Naive thymus-derived CD4-positive, alpha-beta T cell (primary cell): ENCODE measurements at regions of chr17 and their contacts with region 1.

Region 1: DNA sequence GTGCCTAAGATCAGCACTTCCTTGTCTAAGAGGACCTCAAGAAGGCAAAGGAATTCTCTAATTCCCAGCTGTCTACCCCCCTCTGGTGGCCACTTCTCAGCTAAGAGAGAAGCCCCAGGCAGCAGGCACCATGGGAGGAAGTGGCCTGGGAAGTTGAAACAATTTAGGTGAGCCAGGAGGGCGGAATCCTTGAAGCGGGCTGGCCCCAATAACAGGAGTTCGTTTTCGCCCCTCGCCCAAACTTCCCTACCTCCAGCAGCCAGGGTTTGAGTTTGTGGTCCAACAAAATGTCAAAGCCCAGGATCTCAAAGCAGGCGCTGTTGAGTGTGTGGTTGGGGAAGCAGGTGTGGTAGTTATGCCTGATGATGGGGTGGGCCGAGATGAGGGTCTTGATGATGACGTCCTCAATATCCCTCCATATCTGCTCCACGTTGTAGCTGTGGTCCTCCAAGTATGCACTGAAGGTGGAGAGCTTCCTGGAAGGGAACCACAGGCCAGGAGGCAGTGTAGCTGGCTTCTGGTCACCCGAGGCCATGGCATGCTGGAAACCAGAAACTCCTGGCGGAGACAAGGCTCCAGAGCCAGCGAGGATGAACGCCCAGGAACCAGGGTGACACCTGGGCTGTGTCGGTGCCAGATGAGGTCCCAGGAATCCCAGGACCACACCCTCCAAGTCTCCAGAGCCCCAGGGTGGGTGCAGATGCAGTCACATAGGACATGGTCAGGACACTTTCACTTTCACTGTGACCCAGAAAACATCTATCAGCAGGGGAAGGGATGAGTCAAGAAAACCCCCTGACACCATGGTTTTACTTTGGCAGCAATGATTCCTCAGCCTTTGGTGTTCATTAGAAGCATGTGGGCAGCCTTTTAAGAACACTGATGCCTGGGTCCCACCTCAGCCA is 25.6 kb downstream of the TTLL6 start:
- DNase-seq: peak in 1 of 9 donors; percentile 14
- ATAC-seq: no peak
- H3K4me3 ChIP-seq: no peak overlapping the region
- H3K4me3 Mint-ChIP-seq: peak overlapping the region in 1 of 10 donors; percentile 18
- H3K27ac ChIP-seq: no peak overlapping the region
- H3K27ac Mint-ChIP-seq: peak overlapping the region in 1 of 9 donors; percentile 49
- H3K4me1 ChIP-seq: no peaks in the 10 kb centered on the region
- H3K4me1 Mint-ChIP-seq: peaks cover 0 to 22% (median 0%) of the 10 kb centered on the region in 7 donors
- H3K27me3 ChIP-seq: no peaks in the 10 kb centered on the region
- H3K27me3 Mint-ChIP-seq: peaks cover 29 to 62% (median 45%) of the 10 kb centered on the region in 5 donors

Region 2: DNA sequence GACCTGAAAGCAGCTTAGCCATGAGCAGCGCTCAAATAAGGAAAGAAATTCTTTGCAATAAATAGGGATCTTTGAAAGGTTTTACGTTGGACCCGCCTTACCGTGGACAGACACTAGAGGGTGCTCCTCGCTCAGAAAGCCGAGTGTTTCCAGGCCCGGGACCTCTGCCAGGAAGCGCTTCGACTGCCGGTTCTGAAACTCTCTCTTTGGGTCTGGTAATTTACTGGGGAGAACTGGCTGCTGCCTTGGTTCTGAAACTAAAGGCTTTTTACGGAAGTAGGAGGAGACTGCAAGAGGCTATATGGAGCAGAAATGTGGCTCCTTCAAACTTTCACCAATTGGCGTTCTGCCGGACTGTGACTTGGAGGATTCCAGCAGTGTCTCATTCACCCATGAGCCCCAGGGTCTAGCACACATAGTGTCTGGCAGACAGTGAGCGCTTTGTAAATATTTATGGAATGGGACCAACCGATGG is 119.6 kb before region 1 on chr17:
- CTCF ChIA-PET with region 1: no interaction called
- POLR2A ChIA-PET with region 1: no interaction called
- intact Hi-C with region 1: loop called (anchors 1 to 5 kb)
- DNase-seq: peak; percentile 42 to 70 (median 60)
- ATAC-seq: peak; percentile 90
- H3K4me3 ChIP-seq: no peak overlapping the region
- H3K4me3 Mint-ChIP-seq: peak overlapping the region in 8 of 10 donors; percentile 16 to 62 (median 54)
- H3K27ac ChIP-seq: no peak overlapping the region
- H3K27ac Mint-ChIP-seq: no peak overlapping the region
- H3K4me1 ChIP-seq: no peaks in the 10 kb centered on the region
- H3K4me1 Mint-ChIP-seq: peaks cover 0 to 7% (median 5%) of the 10 kb centered on the region in 7 donors
- H3K27me3 ChIP-seq: no peaks in the 10 kb centered on the region
- H3K27me3 Mint-ChIP-seq: peaks cover 28 to 54% (median 42%) of the 10 kb centered on the region in 5 donors

Region 3: GRCh38 chr17:48678141-48678971 is 113.0 kb before region 1 on chr17:
- CTCF ChIA-PET with region 1: interaction called, 19 read pairs
- POLR2A ChIA-PET with region 1: no interaction called
- intact Hi-C with region 1: loop called (anchors 1 to 5 kb)
- DNase-seq: peak; percentile 43 to 80 (median 61)
- ATAC-seq: peak; percentile 95
- H3K4me3 ChIP-seq: no peak overlapping the region
- H3K4me3 Mint-ChIP-seq: peak overlapping the region in 4 of 10 donors; percentile 33 to 67 (median 43)
- H3K27ac ChIP-seq: no peak overlapping the region
- H3K27ac Mint-ChIP-seq: peak overlapping the region in 1 of 9 donors; percentile 43
- H3K4me1 ChIP-seq: no peaks in the 10 kb centered on the region
- H3K4me1 Mint-ChIP-seq: peaks cover 0 to 6% (median 0%) of the 10 kb centered on the region in 7 donors
- H3K27me3 ChIP-seq: no peaks in the 10 kb centered on the region
- H3K27me3 Mint-ChIP-seq: peaks cover 26 to 72% (median 47%) of the 10 kb centered on the region in 5 donors

Region 4: DNA sequence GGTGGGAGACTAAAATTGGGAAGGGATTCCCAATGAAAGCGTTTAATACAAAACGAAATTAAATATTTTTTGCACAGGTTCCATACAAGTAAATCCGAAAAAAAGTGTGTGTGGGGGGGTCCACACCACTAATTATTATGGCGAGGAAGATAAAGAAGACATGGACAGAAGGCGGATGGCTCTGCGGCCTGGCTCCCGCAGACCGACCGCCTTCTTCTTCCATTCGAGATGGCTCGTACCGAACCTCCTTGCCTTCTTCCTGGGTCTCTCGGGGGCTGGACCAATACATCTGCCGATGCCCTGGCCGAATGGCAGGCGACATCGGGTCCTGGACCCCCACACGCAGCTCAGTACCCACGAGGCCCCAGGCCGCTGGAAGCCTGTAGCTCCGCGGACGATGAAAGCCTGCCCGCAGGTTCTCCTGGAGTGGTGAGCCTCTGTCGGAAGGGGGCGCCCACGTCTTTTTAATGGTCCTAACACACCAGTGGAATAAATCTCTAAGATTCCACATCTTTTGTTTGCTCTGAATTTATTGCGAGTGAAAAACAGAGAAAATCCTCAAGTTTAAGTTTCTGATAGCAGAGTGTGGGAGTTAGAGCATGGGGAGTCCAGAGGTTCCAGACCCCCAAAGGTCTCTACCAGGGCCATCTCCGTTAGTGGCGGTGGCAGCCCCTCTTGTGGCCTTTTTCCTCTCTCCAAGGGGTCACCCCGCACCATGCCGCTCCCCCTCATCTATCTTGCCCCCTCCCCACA is 67.0 kb before region 1 on chr17:
- CTCF ChIA-PET with region 1: interaction called, 4 read pairs
- POLR2A ChIA-PET with region 1: no interaction called
- intact Hi-C with region 1: loop called in 1 of 2 experiments (anchors 1 kb)
- DNase-seq: peak; percentile 46 to 73 (median 65)
- ATAC-seq: peak; percentile 81
- H3K4me3 ChIP-seq: no peak overlapping the region
- H3K4me3 Mint-ChIP-seq: peak overlapping the region; percentile 64 to 82 (median 74)
- H3K27ac ChIP-seq: no peak overlapping the region
- H3K27ac Mint-ChIP-seq: peak overlapping the region in 2 of 9 donors; percentile 34 to 87
- H3K4me1 ChIP-seq: peaks cover 27 to 36% of the 10 kb centered on the region in 2 donors
- H3K4me1 Mint-ChIP-seq: peaks cover 26 to 61% (median 41%) of the 10 kb centered on the region in 7 donors
- H3K27me3 ChIP-seq: peaks cover 43 to 92% of the 10 kb centered on the region in 2 donors
- H3K27me3 Mint-ChIP-seq: peaks cover 87 to 99% (median 90%) of the 10 kb centered on the region in 5 donors

Region 5: DNA sequence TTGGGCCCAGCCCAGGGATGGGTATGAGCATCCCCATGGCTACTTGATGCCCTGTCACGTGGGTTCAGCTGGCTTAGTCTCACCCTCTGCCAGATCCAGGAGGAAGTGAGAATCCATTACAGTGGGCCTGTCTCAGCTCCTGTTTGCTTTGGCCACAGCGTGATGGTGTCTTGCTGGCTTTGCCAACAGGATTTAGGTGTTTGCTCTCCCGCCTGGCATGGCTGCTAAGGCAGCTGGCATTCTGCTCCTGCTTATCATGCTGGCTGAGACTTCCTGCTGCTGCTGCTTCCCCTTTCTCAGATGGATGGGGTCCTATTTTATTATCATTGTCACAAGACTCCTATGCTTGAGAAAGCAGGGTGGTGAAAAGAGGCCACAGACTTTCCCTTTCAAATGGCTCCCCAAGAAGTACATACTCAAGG is 34.5 kb before region 1 on chr17:
- CTCF ChIA-PET with region 1: interaction called, 10 read pairs
- POLR2A ChIA-PET with region 1: no interaction called
- intact Hi-C with region 1: no loop called
- DNase-seq: no peak
- ATAC-seq: no peak
- H3K4me3 ChIP-seq: no peak overlapping the region
- H3K4me3 Mint-ChIP-seq: no peak overlapping the region
- H3K27ac ChIP-seq: no peak overlapping the region
- H3K27ac Mint-ChIP-seq: no peak overlapping the region
- H3K4me1 ChIP-seq: peaks cover 5 to 13% of the 10 kb centered on the region in 2 donors
- H3K4me1 Mint-ChIP-seq: peaks cover 3 to 21% (median 18%) of the 10 kb centered on the region in 7 donors
- H3K27me3 ChIP-seq: peaks cover 18 to 43% of the 10 kb centered on the region in 2 donors
- H3K27me3 Mint-ChIP-seq: peaks cover 79 to 88% (median 84%) of the 10 kb centered on the region in 5 donors